Ascending aorta (tissue), 2 donors: ENCODE measurements at regions of chr16 and their contacts with region 1.

Region 1: GRCh38 chr16:87515475-87516330 is 22.9 kb upstream of the ZCCHC14 start:
- DNase-seq: no peak
- H3K4me3 ChIP-seq: no peak overlapping the region
- H3K27ac ChIP-seq: peak overlapping the region; percentile 95 to 99
- H3K4me1 ChIP-seq: peaks cover 9 to 26% of the 10 kb centered on the region in 2 donors
- H3K27me3 ChIP-seq: no peaks in the 10 kb centered on the region
- CTCF ChIP-seq: no peak

Region 2: GRCh38 chr16:87464691-87465300 is 50.9 kb before region 1 on chr16:
- intact Hi-C with region 1: loop called (anchors 1 kb)
- DNase-seq: peak; percentile 85 to 95
- H3K4me3 ChIP-seq: peak overlapping the region; percentile 3 to 55
- H3K27ac ChIP-seq: peak overlapping the region; percentile 74 to 90
- H3K4me1 ChIP-seq: peaks cover 23 to 43% of the 10 kb centered on the region in 2 donors
- H3K27me3 ChIP-seq: no peaks in the 10 kb centered on the region
- CTCF ChIP-seq: no peak

Region 3: GRCh38 chr16:87492721-87493607 is 22.7 kb before region 1 on chr16 and contains the start of gene ZCCHC14:
- intact Hi-C with region 1: loop called (anchors 1 kb)
- DNase-seq: peak; percentile 96 to 99
- H3K4me3 ChIP-seq: peak within 1 kb of the TSS; percentile 57 to 90
- H3K27ac ChIP-seq: peak within 1 kb of the TSS; percentile 21 to 72
- H3K4me1 ChIP-seq: peaks cover 8 to 22% of the 10 kb centered on the region in 2 donors
- H3K27me3 ChIP-seq: no peaks in the 10 kb centered on the region
- CTCF ChIP-seq: peak in 1 of 3 experiments; percentile 22
- total RNA-seq, gene ZCCHC14: 131 TPM

Region 4: GRCh38 chr16:87581833-87582203 is 66.1 kb after region 1 on chr16:
- intact Hi-C with region 1: loop called (anchors 2 kb)
- DNase-seq: peak; percentile 75 to 95
- H3K4me3 ChIP-seq: peak overlapping the region; percentile 29 to 52
- H3K27ac ChIP-seq: peak overlapping the region; percentile 97 to 98
- H3K4me1 ChIP-seq: peaks cover 10 to 21% of the 10 kb centered on the region in 2 donors
- H3K27me3 ChIP-seq: no peaks in the 10 kb centered on the region
- CTCF ChIP-seq: no peak